Caco-2 (cell line): ENCODE measurements at regions of chr22 and their contacts with region 1.

Region 1: DNA sequence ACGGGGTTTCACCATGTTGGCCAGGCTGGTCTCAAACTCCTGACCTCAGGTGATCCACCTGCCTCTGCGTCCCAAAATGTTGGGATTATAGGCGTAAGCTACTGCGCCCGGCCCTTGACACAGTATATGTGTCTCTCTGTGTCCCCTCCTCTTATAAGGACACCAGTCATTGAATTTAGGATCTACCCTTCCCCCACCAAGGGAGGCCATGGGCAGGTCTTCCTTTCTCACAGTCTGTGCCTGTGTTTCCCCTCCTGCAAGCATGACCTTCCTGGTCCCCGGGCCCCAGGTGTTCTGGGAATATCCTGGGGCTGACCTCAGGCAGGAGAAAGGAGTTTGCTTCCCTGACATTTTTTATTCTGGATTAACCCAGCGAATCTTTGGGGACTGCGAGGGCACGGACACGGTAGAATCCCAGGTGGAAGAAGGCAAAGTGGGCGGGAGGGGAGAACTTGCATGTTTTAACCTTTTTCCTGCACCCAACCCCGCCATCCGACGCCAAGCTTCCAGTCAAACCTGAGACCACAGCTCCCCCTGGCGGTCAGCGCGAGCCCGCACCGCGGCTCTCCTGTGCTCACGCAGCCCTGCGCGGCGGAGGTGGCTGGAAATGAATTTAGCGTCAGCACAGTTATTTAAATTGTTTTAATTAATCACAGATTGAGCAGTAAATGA is 42.1 kb upstream of the ISX start:
- DNase-seq: peak; percentile 60 to 83
- H3K4me3 ChIP-seq: no peak overlapping the region
- H3K4me3 Mint-ChIP-seq: no peak overlapping the region
- H3K27ac Mint-ChIP-seq: no peak overlapping the region
- H3K4me1 ChIP-seq: no peaks in the 10 kb centered on the region
- H3K4me1 Mint-ChIP-seq: no peaks in the 10 kb centered on the region
- H3K27me3 ChIP-seq: no peaks in the 10 kb centered on the region
- H3K27me3 Mint-ChIP-seq: peaks cover 11% of the 10 kb centered on the region
- CTCF ChIP-seq: peak; percentile 92 to 93

Region 2: DNA sequence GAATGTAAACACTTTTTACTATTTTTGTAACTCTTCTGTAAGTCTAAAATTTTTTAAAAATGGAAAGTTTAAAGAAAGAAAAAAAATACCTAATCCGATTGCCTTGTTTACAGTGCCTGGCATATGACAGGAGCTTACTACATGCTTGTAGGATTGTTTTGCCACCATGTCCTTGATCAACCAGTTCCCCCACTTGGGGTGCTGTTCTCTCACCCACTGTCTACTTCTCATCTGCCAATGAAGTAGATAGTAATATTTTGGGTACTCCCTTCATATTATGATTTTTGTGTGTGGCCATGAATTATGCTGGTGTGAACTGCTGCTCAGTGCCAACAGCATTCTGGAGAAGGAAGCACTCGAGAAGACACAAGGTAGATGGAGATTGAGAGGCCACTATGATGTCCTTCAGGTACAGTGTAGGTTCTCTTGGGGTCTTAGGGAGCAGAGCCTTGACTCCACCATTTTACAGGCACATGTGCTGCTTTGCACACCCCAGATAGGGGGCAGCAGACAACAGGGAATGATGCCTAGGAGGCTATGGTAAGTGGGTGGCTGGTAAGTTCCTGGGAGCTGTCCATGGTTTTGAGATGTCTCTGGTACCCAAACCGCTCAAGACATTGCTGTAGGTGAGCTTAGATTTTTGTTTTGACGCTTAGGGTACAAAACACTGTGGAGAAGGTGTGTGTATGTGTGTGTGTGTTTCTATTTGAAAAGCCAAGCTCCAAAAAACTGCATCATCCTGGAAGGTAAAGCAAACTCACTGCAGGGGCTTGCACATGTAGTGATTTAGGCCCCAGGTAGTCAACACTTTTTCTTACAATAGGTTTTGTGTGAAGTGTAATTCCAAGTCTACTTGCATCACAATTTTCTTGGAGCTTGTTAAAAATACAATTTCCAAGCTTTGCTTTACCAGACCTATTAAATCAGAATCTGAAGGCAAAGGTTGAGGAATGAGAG is 609.1 kb before region 1 on chr22:
- CTCF ChIA-PET with region 1: interaction called, 5 read pairs
- POLR2A ChIA-PET with region 1: no interaction called
- intact Hi-C with region 1: loop called (anchors 1 kb)
- DNase-seq: peak; percentile 81 to 82
- H3K4me3 ChIP-seq: no peak overlapping the region
- H3K4me3 Mint-ChIP-seq: no peak overlapping the region
- H3K27ac Mint-ChIP-seq: no peak overlapping the region
- H3K4me1 ChIP-seq: no peaks in the 10 kb centered on the region
- H3K4me1 Mint-ChIP-seq: no peaks in the 10 kb centered on the region
- H3K27me3 ChIP-seq: no peaks in the 10 kb centered on the region
- H3K27me3 Mint-ChIP-seq: peaks cover 6% of the 10 kb centered on the region
- CTCF ChIP-seq: peak; percentile 78 to 82

Region 3: DNA sequence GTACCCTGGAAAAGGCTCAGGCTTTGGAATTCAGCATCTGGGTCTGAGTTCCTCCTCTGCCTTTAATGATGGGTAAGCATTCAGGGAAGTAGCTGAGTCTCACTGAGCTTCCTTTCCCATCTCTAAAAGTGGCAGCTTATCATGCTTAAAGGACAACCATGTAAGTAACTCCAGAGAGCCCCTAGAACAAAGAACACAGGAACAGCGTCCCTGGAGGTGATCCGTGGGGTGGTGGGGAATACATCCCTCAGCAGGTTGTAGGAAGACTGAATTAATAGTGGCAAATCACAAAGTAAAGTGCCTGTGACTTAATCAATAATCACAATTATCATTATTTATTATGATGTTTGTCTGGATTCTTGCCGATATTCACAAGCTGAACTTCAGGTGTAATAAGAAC is 72.6 kb before region 1 on chr22:
- CTCF ChIA-PET with region 1: no interaction called
- POLR2A ChIA-PET with region 1: no interaction called
- intact Hi-C with region 1: no loop called
- DNase-seq: no peak
- H3K4me3 ChIP-seq: no peak overlapping the region
- H3K4me3 Mint-ChIP-seq: no peak overlapping the region
- H3K27ac Mint-ChIP-seq: no peak overlapping the region
- H3K4me1 ChIP-seq: no peaks in the 10 kb centered on the region
- H3K4me1 Mint-ChIP-seq: no peaks in the 10 kb centered on the region
- H3K27me3 ChIP-seq: no peaks in the 10 kb centered on the region
- H3K27me3 Mint-ChIP-seq: peaks cover 8% of the 10 kb centered on the region
- CTCF ChIP-seq: no peak